Gastrocnemius medialis (tissue), 4 donors: ENCODE measurements at regions of chr1 and their contacts with region 1.

Region 1: DNA sequence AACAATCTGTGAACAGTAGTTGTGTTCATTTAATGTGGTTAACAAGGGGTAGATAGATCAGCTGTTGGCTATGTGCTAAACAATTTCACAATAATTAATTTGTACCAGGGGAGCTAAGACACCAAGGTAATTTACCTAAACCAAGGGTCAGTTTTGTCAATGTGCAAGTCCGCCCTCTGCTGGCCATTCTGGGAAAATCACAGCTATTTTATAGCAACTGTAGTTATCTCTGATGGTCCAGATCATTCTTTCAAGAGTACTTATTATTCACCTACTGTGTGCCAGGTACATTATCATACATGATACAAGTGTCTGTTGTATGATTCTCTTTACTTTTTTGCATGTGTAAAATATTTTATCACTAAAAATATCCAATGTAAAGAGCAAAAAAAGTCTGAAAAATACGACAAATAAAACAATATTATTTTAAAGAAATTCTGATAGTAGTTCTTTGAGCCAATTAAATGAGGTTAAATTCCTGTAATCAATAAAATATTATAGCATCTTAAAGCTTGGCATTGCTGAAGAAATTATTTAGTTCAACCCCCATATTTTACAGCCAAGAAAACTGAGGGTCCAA is 312.3 kb upstream of the FAM78B start:
- DNase-seq: no peak
- ATAC-seq: no peak
- H3K4me3 ChIP-seq: no peak overlapping the region
- H3K27ac ChIP-seq: no peak overlapping the region
- H3K4me1 ChIP-seq: no peaks in the 10 kb centered on the region
- H3K27me3 ChIP-seq: no peaks in the 10 kb centered on the region
- CTCF ChIP-seq: peak; percentile 41 to 78 (median 62)
- POLR2A ChIP-seq: no peak

Region 2: GRCh38 chr1:165753934-165754333 is 725.2 kb before region 1 on chr1:
- in situ Hi-C with region 1: no loop called
- intact Hi-C with region 1: no loop called
- DNase-seq: no peak
- ATAC-seq: no peak
- H3K4me3 ChIP-seq: no peak overlapping the region
- H3K27ac ChIP-seq: no peak overlapping the region
- H3K4me1 ChIP-seq: peaks cover 0 to 5% of the 10 kb centered on the region in 2 donors
- H3K27me3 ChIP-seq: no peaks in the 10 kb centered on the region
- CTCF ChIP-seq: no peak
- POLR2A ChIP-seq: no peak

Region 3: GRCh38 chr1:165928075-165928731 is 550.9 kb before region 1 on chr1:
- in situ Hi-C with region 1: loop called in 3 of 4 experiments (anchors 5 to 10 kb)
- intact Hi-C with region 1: loop called (anchors 5 kb)
- DNase-seq: peak in 1 of 2 donors; percentile 24
- ATAC-seq: peak; percentile 59 to 72
- H3K4me3 ChIP-seq: no peak overlapping the region
- H3K27ac ChIP-seq: no peak overlapping the region
- H3K4me1 ChIP-seq: no peaks in the 10 kb centered on the region
- H3K27me3 ChIP-seq: no peaks in the 10 kb centered on the region
- CTCF ChIP-seq: peak; percentile 47 to 68 (median 67)
- POLR2A ChIP-seq: no peak

Region 4: DNA sequence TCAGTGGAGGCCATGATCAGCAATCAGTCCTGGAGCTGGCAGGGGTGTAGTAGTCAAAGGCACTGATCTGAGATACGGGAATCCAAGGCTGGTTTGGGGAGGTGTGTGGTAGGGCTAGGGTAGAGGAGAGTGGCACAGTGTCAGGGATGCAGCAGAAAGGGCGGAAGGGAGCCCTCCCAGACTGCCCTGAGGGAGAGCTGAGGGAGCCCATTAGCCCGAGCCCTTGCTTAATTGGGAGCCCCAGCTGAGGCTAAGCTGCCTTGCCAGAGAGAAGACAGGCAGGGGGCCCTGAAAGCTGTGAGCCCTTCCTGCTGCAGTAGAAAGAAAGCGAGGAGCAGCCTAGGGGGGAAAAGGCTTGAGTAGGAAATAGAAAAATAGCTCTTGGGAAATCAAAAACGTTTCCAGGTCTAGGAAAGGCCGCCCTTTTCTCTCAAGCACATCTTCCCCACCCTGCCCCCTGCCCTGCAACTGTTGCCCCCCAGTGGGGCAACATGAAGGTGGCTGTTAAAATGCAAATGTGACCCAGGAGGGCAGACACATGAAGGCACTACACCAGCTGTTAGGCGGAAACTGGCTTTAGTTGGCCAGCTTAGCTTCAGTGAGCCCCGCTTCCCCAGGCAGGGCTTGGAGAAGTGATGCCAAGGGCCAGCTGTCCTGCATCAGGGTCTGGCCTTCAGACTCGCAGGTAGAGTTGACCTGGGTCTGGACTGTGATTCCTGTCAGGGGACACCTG is 545.5 kb before region 1 on chr1:
- in situ Hi-C with region 1: loop called in 3 of 4 experiments (anchors 5 to 10 kb)
- intact Hi-C with region 1: loop called (anchors 5 kb)
- DNase-seq: no peak
- ATAC-seq: no peak
- H3K4me3 ChIP-seq: no peak overlapping the region
- H3K27ac ChIP-seq: no peak overlapping the region
- H3K4me1 ChIP-seq: no peaks in the 10 kb centered on the region
- H3K27me3 ChIP-seq: no peaks in the 10 kb centered on the region
- CTCF ChIP-seq: no peak
- POLR2A ChIP-seq: no peak

Region 5: GRCh38 chr1:166083887-166084286 is 395.3 kb before region 1 on chr1:
- in situ Hi-C with region 1: no loop called
- intact Hi-C with region 1: no loop called
- DNase-seq: no peak
- ATAC-seq: no peak
- H3K4me3 ChIP-seq: no peak overlapping the region
- H3K27ac ChIP-seq: no peak overlapping the region
- H3K4me1 ChIP-seq: peaks cover 3 to 8% of the 10 kb centered on the region in 2 donors
- H3K27me3 ChIP-seq: no peaks in the 10 kb centered on the region
- CTCF ChIP-seq: no peak
- POLR2A ChIP-seq: no peak